Natural killer cell (primary cell): ENCODE measurements at regions of chr2 and their contacts with region 1.

Region 1: GRCh38 chr2:173965329-173966025 is at the start of gene SP3:
- DNase-seq: peak; percentile 94 to 98
- ATAC-seq: peak; percentile 58 to 80 (median 67)
- H3K4me3 ChIP-seq: peak within 1 kb of the TSS; percentile 80
- H3K4me3 Mint-ChIP-seq: peak within 1 kb of the TSS; percentile 98
- H3K27ac ChIP-seq: peak within 1 kb of the TSS; percentile 96
- H3K27ac Mint-ChIP-seq: peak within 1 kb of the TSS; percentile 97 to 98
- H3K4me1 ChIP-seq: peaks cover 8% of the 10 kb centered on the region
- H3K4me1 Mint-ChIP-seq: peaks cover 34 to 35% of the 10 kb centered on the region in 2 donors
- H3K27me3 ChIP-seq: no peaks in the 10 kb centered on the region
- H3K27me3 Mint-ChIP-seq: no peaks in the 10 kb centered on the region
- CTCF ChIP-seq: no peak
- total RNA-seq, gene SP3: 179 to 200 (median 188) TPM

Region 2: GRCh38 chr2:173504372-173504771 is 461.1 kb before region 1 on chr2:
- intact Hi-C with region 1: no loop called
- DNase-seq: no peak
- ATAC-seq: no peak
- H3K4me3 ChIP-seq: no peak overlapping the region
- H3K4me3 Mint-ChIP-seq: no peak overlapping the region
- H3K27ac ChIP-seq: no peak overlapping the region
- H3K27ac Mint-ChIP-seq: no peak overlapping the region
- H3K4me1 ChIP-seq: no peaks in the 10 kb centered on the region
- H3K4me1 Mint-ChIP-seq: no peaks in the 10 kb centered on the region
- H3K27me3 ChIP-seq: no peaks in the 10 kb centered on the region
- H3K27me3 Mint-ChIP-seq: peaks cover 7 to 11% of the 10 kb centered on the region in 2 donors
- CTCF ChIP-seq: no peak

Region 3: GRCh38 chr2:173922760-173923159 is 42.7 kb before region 1 on chr2:
- intact Hi-C with region 1: loop called (anchors 5 kb)
- DNase-seq: no peak
- ATAC-seq: no peak
- H3K4me3 ChIP-seq: no peak overlapping the region
- H3K4me3 Mint-ChIP-seq: no peak overlapping the region
- H3K27ac ChIP-seq: no peak overlapping the region
- H3K27ac Mint-ChIP-seq: peak overlapping the region; percentile 67 to 78
- H3K4me1 ChIP-seq: peaks cover 16% of the 10 kb centered on the region
- H3K4me1 Mint-ChIP-seq: peaks cover 69 to 75% of the 10 kb centered on the region in 2 donors
- H3K27me3 ChIP-seq: no peaks in the 10 kb centered on the region
- H3K27me3 Mint-ChIP-seq: no peaks in the 10 kb centered on the region
- CTCF ChIP-seq: no peak

Region 4: DNA sequence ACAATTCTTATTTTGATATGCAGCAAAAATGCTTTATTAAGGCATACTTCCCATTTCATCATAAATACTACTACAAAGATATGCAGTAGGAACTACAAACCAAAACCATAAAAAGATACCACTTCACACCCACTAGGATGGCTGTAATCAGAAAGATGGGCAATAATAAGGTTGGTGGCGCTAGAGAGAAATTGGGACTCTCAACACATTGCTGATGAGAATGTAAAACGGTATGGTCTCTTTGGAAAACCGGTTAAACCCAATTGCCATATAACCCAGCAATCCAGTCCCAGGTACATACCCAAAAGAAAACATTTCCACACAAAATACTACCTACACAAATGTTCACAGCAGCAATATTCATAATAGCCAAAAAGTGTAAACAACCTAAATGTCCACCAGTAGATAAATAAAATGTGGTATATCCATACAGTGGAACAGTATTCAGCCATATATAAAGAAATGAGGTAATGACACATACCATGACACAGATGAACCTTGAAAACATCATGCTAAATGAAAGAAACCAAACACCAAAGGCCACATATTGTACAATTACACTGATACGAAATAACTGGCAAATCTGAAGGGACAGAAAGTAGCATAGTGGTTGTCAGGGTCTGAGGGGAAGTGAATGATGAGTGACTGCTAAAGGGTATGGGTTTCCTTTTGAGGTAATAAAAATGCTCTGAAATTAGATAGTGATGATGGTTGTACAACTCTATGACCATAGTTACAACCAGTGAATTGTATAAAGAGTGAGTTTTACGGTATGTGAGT is 13.0 kb before region 1 on chr2:
- intact Hi-C with region 1: no loop called
- DNase-seq: no peak
- ATAC-seq: peak; percentile 33 to 54 (median 51)
- H3K4me3 ChIP-seq: no peak overlapping the region
- H3K4me3 Mint-ChIP-seq: peak overlapping the region; percentile 47
- H3K27ac ChIP-seq: no peak overlapping the region
- H3K27ac Mint-ChIP-seq: peak overlapping the region; percentile 67 to 82
- H3K4me1 ChIP-seq: peaks cover 9% of the 10 kb centered on the region
- H3K4me1 Mint-ChIP-seq: peaks cover 94 to 97% of the 10 kb centered on the region in 2 donors
- H3K27me3 ChIP-seq: no peaks in the 10 kb centered on the region
- H3K27me3 Mint-ChIP-seq: no peaks in the 10 kb centered on the region
- CTCF ChIP-seq: no peak

Region 5: GRCh38 chr2:174012347-174013314 is 47.2 kb after region 1 on chr2:
- intact Hi-C with region 1: loop called (anchors 2 kb)
- DNase-seq: peak; percentile 60 to 63
- ATAC-seq: peak; percentile 87 to 89 (median 89)
- H3K4me3 ChIP-seq: peak overlapping the region; percentile 53
- H3K4me3 Mint-ChIP-seq: peak overlapping the region; percentile 84
- H3K27ac ChIP-seq: peak overlapping the region; percentile 48
- H3K27ac Mint-ChIP-seq: peak overlapping the region; percentile 64 to 92
- H3K4me1 ChIP-seq: peaks cover 16% of the 10 kb centered on the region
- H3K4me1 Mint-ChIP-seq: peaks cover 7 to 21% of the 10 kb centered on the region in 2 donors
- H3K27me3 ChIP-seq: no peaks in the 10 kb centered on the region
- H3K27me3 Mint-ChIP-seq: peaks cover 3 to 5% of the 10 kb centered on the region in 2 donors
- CTCF ChIP-seq: no peak

Region 6: GRCh38 chr2:174248187-174248997 is 282.9 kb after region 1 on chr2 and contains the start of gene OLA1:
- intact Hi-C with region 1: loop called (anchors 1 kb)
- DNase-seq: peak; percentile 94 to 97
- ATAC-seq: peak; percentile 96 to 99 (median 96)
- H3K4me3 ChIP-seq: peak within 1 kb of the TSS; percentile 87
- H3K4me3 Mint-ChIP-seq: peak within 1 kb of the TSS; percentile 90
- H3K27ac ChIP-seq: peak within 1 kb of the TSS; percentile 70
- H3K27ac Mint-ChIP-seq: peak within 1 kb of the TSS; percentile 78 to 91
- H3K4me1 ChIP-seq: peaks cover 13% of the 10 kb centered on the region
- H3K4me1 Mint-ChIP-seq: peaks cover 19 to 29% of the 10 kb centered on the region in 2 donors
- H3K27me3 ChIP-seq: no peaks in the 10 kb centered on the region
- H3K27me3 Mint-ChIP-seq: peaks cover 2 to 6% of the 10 kb centered on the region in 2 donors
- CTCF ChIP-seq: no peak
- total RNA-seq, gene OLA1: 42.3 to 45.9 (median 43.9) TPM

Region 7: DNA sequence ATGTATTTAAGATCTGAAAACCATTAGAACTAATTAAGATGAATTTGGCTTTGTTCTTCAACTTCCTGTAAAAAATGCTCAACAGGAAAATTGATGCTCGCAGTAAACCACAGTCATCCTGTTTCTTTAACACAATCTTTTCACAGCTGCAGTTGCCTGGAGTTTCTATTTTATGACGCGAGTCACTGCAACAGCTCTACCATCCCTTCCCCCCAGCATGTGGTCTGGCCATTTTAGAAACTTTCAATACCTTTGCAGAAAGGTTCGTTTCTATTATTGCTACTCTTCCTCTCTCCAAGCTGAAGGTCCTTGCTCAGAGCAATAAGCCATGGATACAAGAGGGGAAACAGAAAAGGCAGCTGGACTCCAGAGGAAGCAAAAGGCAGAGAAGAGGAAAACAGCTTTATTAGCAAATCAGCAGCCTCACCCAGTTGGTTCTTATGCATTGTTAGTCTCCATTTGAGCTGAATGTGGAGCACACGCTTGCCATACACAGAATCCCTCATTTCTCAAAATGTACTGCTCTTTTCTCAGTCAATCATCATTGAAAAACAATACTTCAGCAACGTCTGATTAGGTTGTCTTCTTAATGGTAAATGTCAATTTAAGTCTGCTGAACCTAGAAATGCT is 628.2 kb after region 1 on chr2:
- intact Hi-C with region 1: loop called (anchors 10 kb)
- DNase-seq: peak; percentile 57 to 93
- ATAC-seq: peak; percentile 60 to 84 (median 77)
- H3K4me3 ChIP-seq: peak overlapping the region; percentile 87
- H3K4me3 Mint-ChIP-seq: peak overlapping the region; percentile 91
- H3K27ac ChIP-seq: peak overlapping the region; percentile 97
- H3K27ac Mint-ChIP-seq: peak overlapping the region; percentile 95 to 98
- H3K4me1 ChIP-seq: peaks cover 50% of the 10 kb centered on the region
- H3K4me1 Mint-ChIP-seq: peaks cover 64 to 88% of the 10 kb centered on the region in 2 donors
- H3K27me3 ChIP-seq: no peaks in the 10 kb centered on the region
- H3K27me3 Mint-ChIP-seq: no peaks in the 10 kb centered on the region
- CTCF ChIP-seq: no peak

Region 8: GRCh38 chr2:175372704-175373701 is 1407.5 kb after region 1 on chr2:
- intact Hi-C with region 1: no loop called
- DNase-seq: no peak
- ATAC-seq: no peak
- H3K4me3 ChIP-seq: no peak overlapping the region
- H3K4me3 Mint-ChIP-seq: no peak overlapping the region
- H3K27ac ChIP-seq: no peak overlapping the region
- H3K27ac Mint-ChIP-seq: no peak overlapping the region
- H3K4me1 ChIP-seq: no peaks in the 10 kb centered on the region
- H3K4me1 Mint-ChIP-seq: no peaks in the 10 kb centered on the region
- H3K27me3 ChIP-seq: peaks cover 5% of the 10 kb centered on the region
- H3K27me3 Mint-ChIP-seq: peaks cover 15 to 32% of the 10 kb centered on the region in 2 donors
- CTCF ChIP-seq: no peak